Activated B cell treated with CpG ODN at 0.5 μM for 24 hours (primary cell): ENCODE measurements at regions of chr9 and their contacts with region 1.

Region 1: DNA sequence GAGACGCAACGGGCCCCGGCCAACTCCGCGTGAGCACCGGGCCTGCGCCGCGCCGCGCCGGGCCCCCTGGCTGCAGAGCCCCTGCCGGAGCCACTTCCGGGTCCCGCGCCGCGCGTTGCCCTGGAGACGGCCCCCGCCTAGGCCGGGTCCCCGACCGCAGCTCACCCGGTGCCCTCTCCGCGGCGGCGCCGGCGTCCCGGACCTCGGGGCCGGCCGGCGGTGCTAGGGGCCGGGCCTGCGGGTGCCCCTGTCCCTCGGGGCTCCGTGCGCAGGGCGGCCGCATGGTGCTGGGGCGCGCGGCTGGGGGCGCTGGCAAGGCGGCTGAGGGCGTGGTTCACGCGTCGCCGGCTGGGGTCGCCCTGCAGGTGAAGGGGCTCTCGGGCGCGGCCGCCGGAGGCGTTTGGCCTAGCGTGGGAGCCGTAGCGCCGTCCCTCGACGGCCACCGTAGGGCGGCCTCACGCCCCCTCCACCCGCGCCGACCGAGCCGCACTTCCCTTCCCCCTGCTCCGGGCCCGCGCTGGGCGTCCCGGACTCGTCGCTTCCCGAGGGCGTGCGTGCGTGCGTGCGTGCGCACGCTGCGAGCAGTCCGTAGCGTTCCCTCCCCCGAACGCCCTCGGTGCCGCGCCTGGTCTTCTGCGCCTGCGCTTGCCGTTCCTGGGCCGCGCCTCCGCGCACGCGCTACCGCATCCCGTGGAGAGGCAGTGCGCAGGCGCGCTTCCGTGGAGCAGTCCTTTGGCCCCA is at the start of gene TMEM250:
- DNase-seq: peak; percentile 96
- ATAC-seq: peak; percentile 89
- H3K4me3 Mint-ChIP-seq: peak within 1 kb of the TSS; percentile 81
- H3K27ac Mint-ChIP-seq: peak within 1 kb of the TSS; percentile 74
- H3K4me1 Mint-ChIP-seq: peaks cover 7% of the 10 kb centered on the region
- H3K27me3 Mint-ChIP-seq: no peaks in the 10 kb centered on the region
- CTCF ChIP-seq: no peak
- total RNA-seq, gene TMEM250: 23.3 and 23.4 TPM in 2 replicates

Region 2: GRCh38 chr9:135864447-135865049 is 253.9 kb before region 1 on chr9:
- CTCF ChIA-PET with region 1: interaction called, 10 read pairs
- POLR2A ChIA-PET with region 1: no interaction called
- intact Hi-C with region 1: no loop called
- DNase-seq: peak; percentile 54
- ATAC-seq: peak; percentile 42
- H3K4me3 Mint-ChIP-seq: no peak overlapping the region
- H3K27ac Mint-ChIP-seq: no peak overlapping the region
- H3K4me1 Mint-ChIP-seq: peaks cover 7% of the 10 kb centered on the region
- H3K27me3 Mint-ChIP-seq: no peaks in the 10 kb centered on the region
- CTCF ChIP-seq: peak; percentile 36

Region 3: GRCh38 chr9:135961277-135961705 is 157.2 kb before region 1 on chr9 and contains the start of gene UBAC1:
- CTCF ChIA-PET with region 1: interaction called, 68 read pairs
- POLR2A ChIA-PET with region 1: interaction called, 4 read pairs
- intact Hi-C with region 1: loop called (anchors 1 kb)
- DNase-seq: peak; percentile 99
- ATAC-seq: peak; percentile 91
- H3K4me3 Mint-ChIP-seq: peak within 1 kb of the TSS; percentile 87
- H3K27ac Mint-ChIP-seq: peak within 1 kb of the TSS; percentile 76
- H3K4me1 Mint-ChIP-seq: peaks cover 29% of the 10 kb centered on the region
- H3K27me3 Mint-ChIP-seq: peaks cover 9% of the 10 kb centered on the region
- CTCF ChIP-seq: no peak
- total RNA-seq, gene UBAC1: 24.3 and 25.5 TPM in 2 replicates

Region 4: DNA sequence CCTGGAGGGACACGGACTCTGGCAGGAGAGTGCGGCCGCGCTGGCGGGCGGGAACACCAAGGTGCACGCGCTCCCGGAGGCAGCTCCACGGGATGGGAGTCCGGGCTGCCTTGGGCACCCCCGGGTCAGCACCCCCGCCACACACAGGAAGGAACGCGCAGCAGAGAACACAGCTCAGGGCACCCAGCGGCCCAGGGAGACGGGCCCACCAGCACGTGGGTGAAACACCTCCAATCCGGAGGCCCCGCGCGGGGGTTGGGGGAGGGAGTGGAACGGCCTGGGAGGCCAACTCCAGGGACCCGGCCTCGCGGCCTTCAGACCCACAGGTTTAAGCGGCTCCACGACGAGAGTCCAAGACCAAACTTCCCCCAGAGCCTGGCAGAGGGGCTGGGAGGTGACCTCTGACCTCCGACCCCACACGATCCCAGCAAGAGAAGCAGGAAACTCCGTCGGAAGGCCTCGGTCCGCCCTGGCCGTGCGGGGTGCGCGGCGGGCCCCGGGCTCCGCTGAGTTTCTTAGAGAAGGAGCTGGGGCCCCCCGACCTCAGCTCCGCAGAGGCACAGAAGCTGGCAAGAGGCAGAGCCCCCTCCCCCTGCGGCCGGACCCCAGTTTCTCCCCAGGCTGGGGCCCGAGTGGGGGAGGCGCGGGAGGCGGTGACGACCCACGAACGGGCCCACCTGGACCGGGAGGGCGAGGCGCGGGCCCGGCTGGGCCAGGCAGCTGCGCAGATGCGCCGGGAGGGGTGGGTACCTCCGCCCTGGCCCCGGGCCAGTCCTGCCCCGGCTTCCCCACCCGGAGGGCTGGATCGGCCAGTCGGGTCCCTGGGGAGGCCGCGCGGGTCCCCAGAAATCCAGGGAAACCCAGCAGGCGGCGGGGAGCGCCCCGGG is 24.3 kb before region 1 on chr9:
- CTCF ChIA-PET with region 1: interaction called, 10 read pairs
- POLR2A ChIA-PET with region 1: interaction called, 3 read pairs
- intact Hi-C with region 1: loop called (anchors 1 kb)
- DNase-seq: no peak
- ATAC-seq: peak; percentile 65
- H3K4me3 Mint-ChIP-seq: peak overlapping the region; percentile 71
- H3K27ac Mint-ChIP-seq: no peak overlapping the region
- H3K4me1 Mint-ChIP-seq: peaks cover 3% of the 10 kb centered on the region
- H3K27me3 Mint-ChIP-seq: peaks cover 33% of the 10 kb centered on the region
- CTCF ChIP-seq: no peak

Region 5: DNA sequence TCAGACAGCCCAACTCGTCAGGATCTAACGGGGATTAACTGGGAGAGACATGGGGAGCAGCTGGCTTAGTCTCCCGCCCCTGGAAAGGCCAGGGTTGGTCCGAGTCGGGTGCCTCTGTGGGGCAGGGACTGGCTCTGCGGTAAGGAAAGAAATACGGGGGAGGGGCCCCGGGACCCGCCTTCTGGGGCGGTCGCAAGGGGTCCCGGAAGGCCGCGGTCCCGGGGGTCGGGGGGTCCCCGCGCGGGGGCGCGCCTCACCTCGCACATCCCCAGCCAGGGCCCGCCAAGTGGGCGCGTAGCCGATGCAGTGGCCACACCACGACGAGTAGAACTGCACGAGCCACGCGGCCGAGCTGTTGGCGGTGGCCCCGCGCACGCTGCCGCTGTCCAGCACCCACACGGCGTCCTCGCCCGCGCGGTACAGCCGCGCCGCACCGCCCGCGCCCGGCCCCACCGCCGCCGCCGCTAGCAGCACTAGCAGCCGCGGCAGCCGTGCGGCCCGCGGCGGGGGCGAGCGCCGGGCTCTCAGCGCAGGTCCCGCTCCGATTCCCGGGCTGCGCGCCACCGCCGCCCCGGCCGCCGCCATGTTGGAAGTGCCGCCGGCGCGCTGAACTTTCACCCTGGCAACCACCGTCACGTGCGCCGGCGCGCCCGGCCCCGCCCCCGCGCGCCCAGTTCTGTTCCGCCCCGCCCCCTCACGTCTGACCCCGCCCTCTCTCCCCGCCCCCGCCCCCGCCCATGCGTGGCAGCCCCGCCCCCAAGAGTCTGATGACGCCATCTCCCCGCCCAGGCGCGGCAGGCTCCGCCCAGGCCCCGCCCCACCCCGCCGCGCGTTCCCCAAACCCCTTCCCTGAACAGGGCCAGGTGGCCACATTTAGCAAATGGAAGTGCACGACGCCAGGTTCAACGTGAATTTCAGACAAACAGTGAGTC is 127.0 kb after region 1 on chr9 and contains the start of gene QSOX2:
- CTCF ChIA-PET with region 1: no interaction called
- POLR2A ChIA-PET with region 1: no interaction called
- intact Hi-C with region 1: loop called (anchors 2 kb)
- DNase-seq: peak; percentile 83
- ATAC-seq: peak; percentile 70
- H3K4me3 Mint-ChIP-seq: peak within 1 kb of the TSS; percentile 95
- H3K27ac Mint-ChIP-seq: peak within 1 kb of the TSS; percentile 92
- H3K4me1 Mint-ChIP-seq: peaks cover 52% of the 10 kb centered on the region
- H3K27me3 Mint-ChIP-seq: no peaks in the 10 kb centered on the region
- CTCF ChIP-seq: no peak
- total RNA-seq, gene QSOX2: 43.3 and 49.1 TPM in 2 replicates